ENCODE measurements at regions of chr1 and their contacts with region 1.

Region 1: DNA sequence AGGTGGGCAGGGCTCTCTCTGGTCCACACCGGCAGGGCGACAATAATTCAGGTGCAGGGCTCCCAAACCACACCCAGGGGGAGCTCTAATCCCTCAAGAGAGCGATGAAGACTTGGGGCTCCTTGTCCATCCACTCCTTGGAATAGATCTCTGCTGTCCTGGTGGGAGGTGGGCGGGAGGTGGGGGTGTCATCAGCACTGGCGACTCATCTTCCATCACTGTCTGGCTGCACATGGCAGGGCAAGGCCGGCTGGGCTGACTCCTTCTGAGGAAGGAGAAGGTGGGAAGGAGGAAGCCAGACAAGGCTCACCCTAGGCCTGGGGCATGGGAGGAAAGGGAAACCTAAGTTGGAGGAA is 29.3 kb downstream of the TNNT2 start:
- DNase-seq: no peak
- H3K4me3 ChIP-seq: no peak overlapping the region
- H3K27me3 ChIP-seq: peaks cover 9% of the 10 kb centered on the region
- CTCF ChIP-seq: peak; percentile 78

Region 2: GRCh38 chr1:201114236-201115131 is 233.7 kb before region 1 on chr1:
- CTCF ChIA-PET with region 1: no interaction called
- POLR2A ChIA-PET with region 1: no interaction called
- DNase-seq: peak; percentile 61
- H3K4me3 ChIP-seq: peak overlapping the region; percentile 58
- H3K27me3 ChIP-seq: peaks cover 3% of the 10 kb centered on the region; the same call in 1 of the 2 replicates
- CTCF ChIP-seq: peak; percentile 92

Region 3: GRCh38 chr1:201184307-201185122 is 163.7 kb before region 1 on chr1:
- CTCF ChIA-PET with region 1: no interaction called
- POLR2A ChIA-PET with region 1: no interaction called
- DNase-seq: peak; percentile 54
- H3K4me3 ChIP-seq: no peak overlapping the region
- H3K27me3 ChIP-seq: no peaks in the 10 kb centered on the region; the same call in none of the 2 replicates
- CTCF ChIP-seq: peak; percentile 87

Region 4: DNA sequence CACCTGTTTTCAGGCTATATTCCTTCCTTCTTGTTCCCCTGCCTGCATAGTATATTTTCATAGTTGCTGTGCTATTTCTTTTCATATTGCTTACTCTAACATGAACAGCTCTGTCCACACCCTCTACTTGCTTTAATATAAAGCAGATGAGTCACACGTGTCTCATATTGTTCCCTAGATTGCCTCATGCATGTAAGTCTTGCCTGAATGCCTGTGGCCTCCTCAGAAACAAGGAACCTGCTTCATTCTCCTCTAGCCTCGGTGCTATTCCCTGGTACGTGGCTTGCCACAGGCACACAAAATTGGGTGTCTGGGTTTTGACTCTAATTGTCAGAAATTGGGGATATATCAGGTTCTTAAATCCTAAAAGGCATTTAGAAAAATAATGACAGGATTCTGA is 81.4 kb before region 1 on chr1:
- CTCF ChIA-PET with region 1: interaction called, 48 read pairs
- POLR2A ChIA-PET with region 1: no interaction called
- DNase-seq: peak; percentile 64
- H3K4me3 ChIP-seq: no peak overlapping the region
- H3K27me3 ChIP-seq: no peaks in the 10 kb centered on the region
- CTCF ChIP-seq: no peak

Region 5: GRCh38 chr1:201312298-201312989 is 35.7 kb before region 1 on chr1:
- CTCF ChIA-PET with region 1: interaction called, 17 read pairs
- POLR2A ChIA-PET with region 1: no interaction called
- DNase-seq: no peak
- H3K4me3 ChIP-seq: no peak overlapping the region
- H3K27me3 ChIP-seq: peaks cover 9% of the 10 kb centered on the region
- CTCF ChIP-seq: no peak

Region 6: GRCh38 chr1:201334325-201335173 is 13.6 kb before region 1 on chr1:
- CTCF ChIA-PET with region 1: interaction called, 43 read pairs
- POLR2A ChIA-PET with region 1: no interaction called
- DNase-seq: no peak
- H3K4me3 ChIP-seq: no peak overlapping the region
- H3K27me3 ChIP-seq: peaks cover 12% of the 10 kb centered on the region
- CTCF ChIP-seq: no peak

Region 7: DNA sequence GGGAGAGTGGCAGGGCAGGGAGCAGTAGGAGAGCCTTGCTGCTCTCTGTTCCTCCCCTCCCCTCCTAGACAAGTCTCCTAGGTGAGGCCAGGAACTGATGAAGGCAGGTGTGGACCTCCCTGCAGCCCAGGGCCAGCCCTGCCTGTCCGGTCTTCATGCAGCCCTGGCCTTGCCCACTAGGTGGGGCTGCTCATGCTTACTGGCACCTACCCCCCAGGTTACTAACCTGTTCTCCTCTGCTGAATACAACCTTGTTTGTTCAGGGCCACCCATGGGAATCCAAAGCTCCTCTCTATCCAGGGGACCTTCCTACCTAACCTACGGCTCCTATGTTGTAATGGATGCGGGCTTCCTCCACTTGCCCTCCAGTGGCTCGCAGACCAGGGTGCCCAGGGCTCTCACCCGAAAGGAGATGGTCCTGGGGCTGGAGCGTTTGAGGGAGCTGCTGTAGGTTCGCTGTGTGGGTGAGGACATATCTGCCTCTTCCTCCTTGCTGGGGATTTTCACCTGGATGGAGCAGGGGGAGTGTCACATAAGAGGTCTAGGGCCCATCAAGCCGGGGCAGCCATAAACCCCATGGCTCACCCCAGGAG is 37.2 kb after region 1 on chr1:
- CTCF ChIA-PET with region 1: interaction called, 14 read pairs
- POLR2A ChIA-PET with region 1: no interaction called
- DNase-seq: no peak
- H3K4me3 ChIP-seq: no peak overlapping the region
- H3K27me3 ChIP-seq: no peaks in the 10 kb centered on the region; the same call in 1 of the 2 replicates
- CTCF ChIP-seq: peak; percentile 90

Region 8: DNA sequence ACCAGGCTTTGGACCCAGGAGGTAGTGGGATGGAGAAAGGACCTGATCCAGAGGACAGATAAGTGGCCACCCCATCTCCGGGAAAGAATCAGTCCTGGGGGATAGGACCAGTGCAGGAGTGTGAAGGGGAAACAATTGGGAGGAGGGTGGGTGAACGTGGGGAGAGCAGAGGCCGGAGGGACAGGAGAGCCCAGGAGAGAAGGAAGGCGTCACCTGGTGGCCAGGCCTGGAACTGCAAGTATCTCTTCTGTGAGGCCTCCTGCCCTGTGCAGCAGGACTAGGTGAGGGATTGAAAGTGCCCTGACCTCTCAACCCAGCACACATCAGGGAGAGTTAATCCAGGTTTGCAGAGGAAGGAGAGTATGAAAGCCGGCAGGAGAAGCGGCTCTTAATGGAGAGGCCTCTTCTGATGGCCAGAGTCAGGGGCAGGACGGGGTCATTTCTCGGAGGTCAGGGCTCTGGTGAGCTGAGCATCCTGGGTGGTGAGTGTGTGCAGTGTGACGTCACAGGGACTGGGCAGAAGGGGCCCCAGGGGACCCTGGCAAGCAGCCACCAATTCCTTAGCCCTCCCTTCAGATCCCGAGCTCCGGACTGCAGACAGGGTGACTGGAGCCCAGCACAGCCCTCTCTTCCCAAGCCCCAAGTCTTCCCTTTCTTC is 60.1 kb after region 1 on chr1:
- CTCF ChIA-PET with region 1: interaction called, 49 read pairs
- POLR2A ChIA-PET with region 1: no interaction called
- DNase-seq: peak; percentile 4
- H3K4me3 ChIP-seq: no peak overlapping the region
- H3K27me3 ChIP-seq: peaks cover 27% of the 10 kb centered on the region
- CTCF ChIP-seq: peak; percentile 99